BJ (cell line): ENCODE measurements at regions of chr1 and their contacts with region 1.

Region 1: GRCh38 chr1:168342572-168343280 is 62.0 kb downstream of the TBX19 start:
- DNase-seq: peak; percentile 66
- H3K4me3 ChIP-seq: peak overlapping the region; percentile 14; the same call in 1 of the 2 replicates
- H3K27me3 ChIP-seq: no peaks in the 10 kb centered on the region
- CTCF ChIP-seq: peak; percentile 84

Region 2: GRCh38 chr1:168170564-168171508 is 171.9 kb before region 1 on chr1:
- CTCF ChIA-PET with region 1: no interaction called
- POLR2A ChIA-PET with region 1: no interaction called
- DNase-seq: no peak
- H3K4me3 ChIP-seq: no peak overlapping the region
- H3K27me3 ChIP-seq: no peaks in the 10 kb centered on the region
- CTCF ChIP-seq: no peak

Region 3: DNA sequence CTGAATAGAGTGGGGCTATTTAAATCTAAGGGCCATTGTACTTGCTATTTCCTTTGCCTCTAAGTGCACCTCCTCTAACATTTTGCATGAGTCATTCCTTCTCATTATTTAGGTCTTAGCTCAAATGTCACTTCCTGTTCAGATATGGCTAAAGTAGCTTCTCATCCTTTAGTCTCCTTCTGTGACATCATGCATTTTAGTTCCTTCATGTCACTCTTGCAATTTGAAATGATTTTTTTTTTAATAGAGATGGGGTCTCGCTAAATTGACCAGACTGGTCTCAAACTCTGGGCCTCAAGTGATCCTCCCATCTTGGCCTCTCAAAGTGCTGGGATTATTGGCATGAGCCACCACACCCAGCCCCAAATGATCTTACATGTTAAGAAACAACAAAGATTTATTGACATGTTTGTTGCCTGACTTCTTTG is 55.5 kb before region 1 on chr1:
- CTCF ChIA-PET with region 1: no interaction called
- POLR2A ChIA-PET with region 1: no interaction called
- DNase-seq: no peak
- H3K4me3 ChIP-seq: no peak overlapping the region
- H3K27me3 ChIP-seq: no peaks in the 10 kb centered on the region
- CTCF ChIP-seq: no peak

Region 4: DNA sequence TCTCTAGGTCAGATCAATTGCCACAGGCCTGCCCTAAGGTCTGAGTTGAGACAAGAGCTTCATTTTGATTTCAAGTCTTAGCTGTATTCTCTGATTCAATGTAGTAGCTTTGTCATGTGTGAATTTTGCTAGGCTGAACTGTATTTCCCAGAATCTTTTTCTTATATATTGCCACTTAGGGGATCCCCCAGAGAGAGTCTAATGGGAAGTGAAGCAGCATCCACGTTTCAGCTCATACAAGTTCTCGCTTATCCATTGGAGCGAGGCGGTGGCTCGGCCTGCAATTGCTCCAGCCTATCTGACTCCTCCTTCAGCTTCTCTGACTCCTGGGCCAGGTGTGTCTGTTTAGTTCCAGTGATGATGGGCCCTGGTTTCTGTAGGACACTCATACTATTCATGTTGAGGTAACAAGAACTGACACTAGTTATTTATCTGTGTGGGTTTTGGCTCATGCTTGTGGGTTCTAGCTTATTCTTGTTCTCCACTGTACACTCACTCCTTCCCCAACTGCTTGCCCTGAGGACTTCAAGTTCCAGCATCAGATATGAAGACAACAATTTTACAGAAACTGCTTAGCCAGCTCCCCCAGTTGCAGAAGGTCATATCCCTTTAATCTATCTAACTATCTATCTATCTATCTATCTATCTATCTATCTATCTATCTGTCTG is 13.9 kb before region 1 on chr1:
- CTCF ChIA-PET with region 1: interaction called, 12 read pairs
- POLR2A ChIA-PET with region 1: no interaction called
- DNase-seq: no peak
- H3K4me3 ChIP-seq: no peak overlapping the region
- H3K27me3 ChIP-seq: no peaks in the 10 kb centered on the region
- CTCF ChIP-seq: no peak

Region 5: GRCh38 chr1:168372861-168373371 is 30.2 kb after region 1 on chr1:
- CTCF ChIA-PET with region 1: interaction called, 10 read pairs
- POLR2A ChIA-PET with region 1: no interaction called
- DNase-seq: no peak
- H3K4me3 ChIP-seq: no peak overlapping the region
- H3K27me3 ChIP-seq: no peaks in the 10 kb centered on the region; the same call in 1 of the 2 replicates
- CTCF ChIP-seq: no peak